BJ (cell line): ENCODE measurements at regions of chr9 and their contacts with region 1.

Region 1: GRCh38 chr9:87119328-87119881 is 172.1 kb upstream of the GAS1 start:
- DNase-seq: peak; percentile 42
- H3K4me3 ChIP-seq: no peak overlapping the region
- H3K27me3 ChIP-seq: no peaks in the 10 kb centered on the region
- CTCF ChIP-seq: no peak

Region 2: DNA sequence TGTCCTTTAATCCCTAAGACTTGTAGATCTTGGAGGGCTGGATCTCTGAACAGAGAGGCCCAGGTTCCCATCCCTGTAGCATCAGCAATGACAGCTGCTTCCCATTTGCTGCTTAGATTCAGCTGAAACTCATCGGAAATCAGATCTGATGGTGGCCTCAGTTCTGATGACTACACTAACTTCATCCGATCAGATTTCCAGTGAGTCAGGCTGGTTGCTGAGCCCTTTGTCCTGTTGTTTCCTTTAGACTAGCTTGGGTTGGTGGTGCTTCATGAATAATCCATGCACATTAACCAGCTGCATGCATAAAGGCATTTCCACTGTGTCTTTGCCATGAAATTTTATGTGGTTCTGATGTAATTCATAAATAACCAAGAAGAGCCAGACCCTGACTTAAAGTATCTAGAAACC is 570.0 kb before region 1 on chr9:
- CTCF ChIA-PET with region 1: no interaction called
- POLR2A ChIA-PET with region 1: interaction called, 14 read pairs
- DNase-seq: peak; percentile 84
- H3K4me3 ChIP-seq: no peak overlapping the region
- H3K27me3 ChIP-seq: no peaks in the 10 kb centered on the region
- CTCF ChIP-seq: no peak

Region 3: GRCh38 chr9:86772635-86772993 is 346.8 kb before region 1 on chr9:
- CTCF ChIA-PET with region 1: no interaction called
- POLR2A ChIA-PET with region 1: no interaction called
- DNase-seq: no peak
- H3K4me3 ChIP-seq: no peak overlapping the region
- H3K27me3 ChIP-seq: peaks cover 4% of the 10 kb centered on the region; the same call in 1 of the 2 replicates
- CTCF ChIP-seq: no peak

Region 4: DNA sequence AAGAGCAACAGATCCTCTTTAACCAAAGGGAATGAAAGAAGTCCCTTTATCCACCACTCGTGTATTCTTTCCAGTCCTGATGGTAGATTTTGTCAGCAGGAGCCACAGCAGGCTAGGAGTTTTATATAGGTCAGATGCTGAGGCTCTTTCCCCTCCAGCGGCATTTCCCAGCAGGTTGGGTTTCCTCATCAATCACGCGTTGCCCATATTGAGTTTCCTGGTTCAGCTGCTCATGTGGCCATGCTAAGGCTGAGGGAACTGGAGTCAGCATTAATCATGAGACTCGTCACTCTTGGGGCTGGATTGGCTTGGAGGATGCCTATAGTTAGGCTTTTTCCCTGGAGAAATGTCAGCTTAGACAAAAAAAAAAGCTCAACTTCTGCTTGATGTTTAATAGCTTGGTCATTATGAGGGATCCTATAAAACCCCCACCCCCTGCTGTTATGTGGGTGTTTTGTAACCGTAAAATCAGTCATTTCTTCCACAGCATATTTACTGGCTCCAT is 21.3 kb after region 1 on chr9:
- CTCF ChIA-PET with region 1: no interaction called
- POLR2A ChIA-PET with region 1: no interaction called
- DNase-seq: no peak
- H3K4me3 ChIP-seq: no peak overlapping the region
- H3K27me3 ChIP-seq: peaks cover 1% of the 10 kb centered on the region; the same call in 1 of the 2 replicates
- CTCF ChIP-seq: no peak

Region 5: DNA sequence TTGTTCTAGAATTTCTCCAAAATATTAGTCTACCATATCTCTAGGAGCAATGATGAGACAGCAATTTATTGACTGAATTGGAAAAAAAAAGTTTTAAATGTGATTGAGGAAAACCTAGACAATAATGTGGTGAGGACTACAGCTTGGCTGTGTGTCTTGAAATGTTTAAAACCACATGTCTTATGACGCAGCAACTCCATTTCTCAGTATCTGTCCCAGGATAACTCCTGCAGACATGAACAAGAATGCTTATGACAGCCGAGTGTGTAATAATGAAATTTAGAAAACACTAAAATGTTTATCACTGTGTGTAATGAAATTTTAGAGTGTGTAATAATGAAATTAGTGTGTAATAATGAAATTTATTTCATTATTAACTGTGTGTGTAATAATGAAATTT is 124.2 kb after region 1 on chr9:
- CTCF ChIA-PET with region 1: no interaction called
- POLR2A ChIA-PET with region 1: no interaction called
- DNase-seq: no peak
- H3K4me3 ChIP-seq: no peak overlapping the region
- H3K27me3 ChIP-seq: no peaks in the 10 kb centered on the region
- CTCF ChIP-seq: no peak